ENCODE measurements at regions of chr10 and their contacts with region 1.

Region 1: GRCh38 chr10:103481974-103482531 is 3.0 kb upstream of the CALHM3 start:
- DNase-seq: peak; percentile 59
- H3K4me3 ChIP-seq: no peak overlapping the region
- H3K27ac ChIP-seq: no peak overlapping the region
- H3K4me1 ChIP-seq: peaks cover 18% of the 10 kb centered on the region
- H3K27me3 ChIP-seq: no peaks in the 10 kb centered on the region
- CTCF ChIP-seq: peak; percentile 55 to 72 (median 63)
- POLR2A ChIP-seq: no peak

Region 2: GRCh38 chr10:103083266-103083976 is 398.6 kb before region 1 on chr10:
- intact Hi-C with region 1: no loop called
- DNase-seq: no peak
- H3K4me3 ChIP-seq: no peak overlapping the region
- H3K27ac ChIP-seq: no peak overlapping the region
- H3K4me1 ChIP-seq: no peaks in the 10 kb centered on the region
- H3K27me3 ChIP-seq: no peaks in the 10 kb centered on the region
- CTCF ChIP-seq: no peak
- POLR2A ChIP-seq: no peak

Region 3: GRCh38 chr10:103416436-103417147 is 65.5 kb before region 1 on chr10:
- intact Hi-C with region 1: loop called (anchors 2 kb)
- DNase-seq: peak; percentile 90
- H3K4me3 ChIP-seq: no peak overlapping the region
- H3K27ac ChIP-seq: no peak overlapping the region
- H3K4me1 ChIP-seq: no peaks in the 10 kb centered on the region
- H3K27me3 ChIP-seq: no peaks in the 10 kb centered on the region
- CTCF ChIP-seq: peak; percentile 66 to 78 (median 75)
- POLR2A ChIP-seq: no peak

Region 4: DNA sequence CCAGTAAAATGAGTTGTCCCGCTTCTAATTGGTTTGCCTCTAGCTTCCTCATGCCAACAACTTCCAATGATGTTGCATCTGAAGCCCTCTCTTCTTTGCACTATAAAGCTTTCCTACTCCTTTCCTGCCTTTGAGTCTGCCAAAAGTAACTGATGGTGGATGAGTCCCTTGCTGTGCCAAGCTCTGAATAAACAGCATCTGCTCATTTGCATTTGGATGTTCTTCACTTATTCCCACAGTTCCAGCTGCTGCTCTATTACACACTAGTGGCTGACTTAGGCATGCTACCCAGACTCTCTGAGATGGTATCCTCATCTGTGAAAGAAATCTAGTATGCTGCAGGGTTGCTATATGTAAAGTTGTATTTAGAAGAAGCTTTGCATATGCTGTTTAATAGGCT is 664.8 kb after region 1 on chr10:
- intact Hi-C with region 1: no loop called
- DNase-seq: no peak
- H3K4me3 ChIP-seq: no peak overlapping the region
- H3K27ac ChIP-seq: no peak overlapping the region
- H3K4me1 ChIP-seq: no peaks in the 10 kb centered on the region
- H3K27me3 ChIP-seq: no peaks in the 10 kb centered on the region
- CTCF ChIP-seq: no peak
- POLR2A ChIP-seq: no peak

Measured in testis (tissue), 5 donors.